ENCODE measurements at regions of chr10 and their contacts with region 1.

Region 1: GRCh38 chr10:11602919-11603523 is 8.4 kb downstream of the USP6NL start:
- DNase-seq: no peak
- H3K4me3 ChIP-seq: no peak overlapping the region
- H3K27ac ChIP-seq: peak overlapping the region in 6 of 8 donors; percentile 23 to 97 (median 96)
- H3K4me1 ChIP-seq: peaks cover 30 to 100% (median 86%) of the 10 kb centered on the region in 6 donors
- H3K27me3 ChIP-seq: no peaks in the 10 kb centered on the region
- CTCF ChIP-seq: no peak
- POLR2A ChIP-seq: no peak

Region 2: GRCh38 chr10:11525503-11525902 is 77.5 kb before region 1 on chr10:
- intact Hi-C with region 1: loop called (anchors 10 kb)
- DNase-seq: no peak
- H3K4me3 ChIP-seq: no peak overlapping the region
- H3K27ac ChIP-seq: peak overlapping the region in 5 of 8 donors; percentile 11 to 28 (median 22)
- H3K4me1 ChIP-seq: peaks cover 13 to 66% (median 52%) of the 10 kb centered on the region in 6 donors
- H3K27me3 ChIP-seq: no peaks in the 10 kb centered on the region
- CTCF ChIP-seq: no peak
- POLR2A ChIP-seq: no peak

Measured in spleen (tissue), 13 donors.